Mammary epithelial cell (primary cell): ENCODE measurements at regions of chr15 and their contacts with region 1.

Region 1: GRCh38 chr15:100049936-100050876 is 291.6 kb downstream of the ADAMTS17 start:
- DNase-seq: no peak
- H3K4me3 ChIP-seq: no peak overlapping the region
- H3K27ac ChIP-seq: no peak overlapping the region
- H3K4me1 ChIP-seq: no peaks in the 10 kb centered on the region
- H3K27me3 ChIP-seq: peaks cover 7% of the 10 kb centered on the region
- CTCF ChIP-seq: no peak

Region 2: GRCh38 chr15:99826157-99826780 is 223.9 kb before region 1 on chr15:
- CTCF ChIA-PET with region 1: no interaction called
- dilution Hi-C with region 1: no loop called
- in situ Hi-C with region 1: no loop called
- intact Hi-C with region 1: no loop called
- DNase-seq: no peak
- H3K4me3 ChIP-seq: no peak overlapping the region
- H3K27ac ChIP-seq: no peak overlapping the region
- H3K4me1 ChIP-seq: no peaks in the 10 kb centered on the region
- H3K27me3 ChIP-seq: peaks cover 3% of the 10 kb centered on the region
- CTCF ChIP-seq: no peak

Region 3: GRCh38 chr15:99998641-99999101 is 51.5 kb before region 1 on chr15:
- CTCF ChIA-PET with region 1: no interaction called
- dilution Hi-C with region 1: loop called (anchors 5 kb)
- in situ Hi-C with region 1: no loop called
- intact Hi-C with region 1: no loop called
- DNase-seq: peak; percentile 80
- H3K4me3 ChIP-seq: no peak overlapping the region
- H3K27ac ChIP-seq: no peak overlapping the region
- H3K4me1 ChIP-seq: peaks cover 13% of the 10 kb centered on the region
- H3K27me3 ChIP-seq: no peaks in the 10 kb centered on the region
- CTCF ChIP-seq: no peak

Region 4: GRCh38 chr15:100106732-100107131 is 56.5 kb after region 1 on chr15:
- CTCF ChIA-PET with region 1: no interaction called
- dilution Hi-C with region 1: loop called (anchors 5 kb)
- in situ Hi-C with region 1: no loop called
- intact Hi-C with region 1: no loop called
- DNase-seq: no peak
- H3K4me3 ChIP-seq: no peak overlapping the region
- H3K27ac ChIP-seq: no peak overlapping the region
- H3K4me1 ChIP-seq: peaks cover 12% of the 10 kb centered on the region
- H3K27me3 ChIP-seq: peaks cover 2% of the 10 kb centered on the region
- CTCF ChIP-seq: no peak